ENCODE measurements at regions of chr2 and their contacts with region 1.

Region 1: DNA sequence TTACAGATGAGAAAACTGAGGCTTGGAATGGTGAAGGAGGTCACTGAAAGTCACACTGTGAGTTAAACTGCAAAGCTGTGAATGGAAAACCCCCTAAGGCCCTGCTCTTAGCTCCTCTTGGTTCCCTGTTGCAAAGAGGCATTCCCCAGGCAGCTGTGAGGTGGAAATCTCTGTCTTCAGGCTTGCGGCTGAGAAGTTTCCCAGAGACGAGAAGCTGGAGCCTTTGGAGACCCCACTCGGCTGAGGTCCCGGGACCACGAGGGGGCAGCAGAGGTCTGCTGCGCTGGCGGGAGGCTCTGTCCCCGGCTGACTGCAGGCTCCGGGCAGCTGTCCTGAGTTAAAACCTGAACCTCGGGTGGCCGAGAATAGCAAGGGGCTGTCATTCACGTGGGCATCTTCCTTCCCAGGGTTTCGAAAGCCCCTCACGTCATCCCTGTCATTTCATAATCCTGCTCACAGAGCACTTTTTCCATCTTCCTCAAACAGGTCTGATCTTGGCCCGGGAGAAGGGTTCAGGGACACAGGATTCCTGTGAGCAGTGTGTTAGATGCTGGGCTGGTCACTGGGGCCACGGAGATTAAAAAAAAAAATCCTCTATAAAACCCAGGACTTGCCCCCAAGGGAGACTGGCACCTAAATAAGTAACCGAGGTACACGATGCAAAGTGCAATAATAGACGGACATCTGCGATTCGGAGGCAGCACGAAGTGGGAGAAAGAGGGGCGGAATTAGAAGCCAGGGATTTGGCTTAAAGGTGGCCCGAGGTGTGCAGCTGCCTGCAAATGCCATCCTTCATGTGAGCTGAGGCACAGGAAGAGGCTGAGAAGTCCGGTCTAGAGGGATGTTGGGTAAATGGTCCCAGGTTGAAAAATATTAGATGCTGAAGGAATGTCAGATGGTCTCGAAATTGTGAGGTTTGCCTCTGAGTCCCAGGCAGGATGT is 24.6 kb upstream of the ATOH8 start:
- DNase-seq: peak; percentile 90
- H3K4me3 ChIP-seq: peak overlapping the region in 1 of 2 experiments; percentile 47; a peak in 1 of 4 replicates
- H3K27ac ChIP-seq: no peak overlapping the region
- H3K4me1 ChIP-seq: peaks cover 0 to 11% of the 10 kb centered on the region in 2 experiments; a peak in 1 of 4 replicates
- H3K27me3 ChIP-seq: no peaks in the 10 kb centered on the region
- CTCF ChIP-seq: peak; percentile 97
- EP300 ChIP-seq: no peak
- RAD21 ChIP-seq: peak; percentile 99

Region 2: GRCh38 chr2:85538486-85539360 is 190.4 kb before region 1 on chr2 and contains the start of gene MAT2A:
- CTCF ChIA-PET with region 1: no interaction called
- POLR2A ChIA-PET with region 1: no interaction called
- DNase-seq: peak; percentile 97
- H3K4me3 ChIP-seq: peak within 1 kb of the TSS; percentile 94 to 99
- H3K27ac ChIP-seq: peak within 1 kb of the TSS; percentile 98 to 100
- H3K4me1 ChIP-seq: peaks cover 29 to 43% of the 10 kb centered on the region in 2 experiments; a peak in 3 of 4 replicates
- H3K27me3 ChIP-seq: no peaks in the 10 kb centered on the region
- CTCF ChIP-seq: peak; percentile 67
- EP300 ChIP-seq: peak in 1 of 2 experiments; percentile 10; a peak in 1 of 4 replicates
- RAD21 ChIP-seq: peak; percentile 60
- polyA plus RNA-seq, gene MAT2A: 187 and 326 TPM in 2 replicates

Region 3: DNA sequence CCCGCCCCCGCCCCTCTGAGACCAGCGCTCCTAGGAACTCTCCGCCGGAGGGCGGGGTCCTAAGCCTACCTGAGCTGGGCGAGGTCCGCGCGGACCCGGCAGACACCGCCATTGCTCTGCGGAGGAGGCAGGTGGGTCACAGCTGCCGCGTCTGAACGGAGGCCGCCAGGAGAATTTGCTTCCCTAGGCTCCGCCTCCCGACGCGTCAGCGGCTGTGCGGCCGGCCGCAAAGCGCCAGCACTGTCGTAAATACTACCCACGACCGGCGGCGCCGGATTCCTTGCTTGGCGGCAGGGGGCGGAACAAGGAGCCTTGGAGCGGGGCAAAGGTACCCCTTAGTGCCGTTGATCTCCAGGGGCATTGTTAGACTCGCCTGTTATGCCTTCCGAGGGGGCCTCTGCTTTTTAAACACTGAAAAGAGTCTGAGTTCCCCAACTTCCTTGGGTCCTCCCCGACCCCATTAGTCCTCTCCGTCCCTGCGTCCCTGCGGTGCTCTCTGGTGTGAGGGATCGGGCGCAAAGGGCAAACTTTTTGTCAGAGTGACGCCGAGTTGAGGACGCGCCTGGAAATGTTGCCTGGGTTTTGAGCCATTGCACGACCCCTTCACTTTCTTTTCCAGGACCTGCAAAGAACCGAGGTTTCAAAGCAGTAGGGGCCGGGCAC is 167.7 kb before region 1 on chr2 and contains the start of gene GGCX:
- CTCF ChIA-PET with region 1: no interaction called
- POLR2A ChIA-PET with region 1: no interaction called
- DNase-seq: peak; percentile 91
- H3K4me3 ChIP-seq: peak within 1 kb of the TSS; percentile 65 to 97
- H3K27ac ChIP-seq: peak within 1 kb of the TSS; percentile 78 to 83
- H3K4me1 ChIP-seq: no peaks in the 10 kb centered on the region; a peak in 2 of 4 replicates
- H3K27me3 ChIP-seq: no peaks in the 10 kb centered on the region
- CTCF ChIP-seq: no peak
- EP300 ChIP-seq: 0 out of 4 replicates have a peak, but pooled peaks of 1 of the 2 experiments have one; percentile 14
- RAD21 ChIP-seq: no peak
- polyA plus RNA-seq, gene GGCX: 26.5 and 34.5 TPM in 2 replicates

Region 4: DNA sequence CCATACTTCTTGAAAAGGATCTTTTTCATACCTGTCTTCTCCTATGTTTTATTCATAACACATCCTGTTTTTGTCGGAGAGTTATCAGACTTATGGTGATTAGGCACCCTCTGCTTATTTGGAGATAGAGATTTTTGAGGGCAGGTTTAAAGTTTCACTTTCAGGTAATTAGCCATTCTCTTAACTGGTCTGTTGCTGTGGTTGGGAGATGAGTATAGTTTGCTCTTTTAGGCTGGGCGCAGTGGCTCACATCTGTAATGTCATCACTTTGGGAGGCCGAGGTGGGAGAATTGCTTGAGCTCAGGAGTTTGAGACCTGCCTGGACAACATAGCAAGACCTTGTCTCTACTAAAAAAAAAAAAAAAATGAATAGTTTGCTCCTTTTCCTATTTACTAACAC is 86.4 kb before region 1 on chr2:
- CTCF ChIA-PET with region 1: interaction called, 12 read pairs
- POLR2A ChIA-PET with region 1: no interaction called
- DNase-seq: no peak
- H3K4me3 ChIP-seq: no peak overlapping the region
- H3K27ac ChIP-seq: no peak overlapping the region
- H3K4me1 ChIP-seq: no peaks in the 10 kb centered on the region
- H3K27me3 ChIP-seq: no peaks in the 10 kb centered on the region
- CTCF ChIP-seq: no peak
- EP300 ChIP-seq: no peak
- RAD21 ChIP-seq: no peak

Region 5: GRCh38 chr2:85707304-85707703 is 21.9 kb before region 1 on chr2:
- CTCF ChIA-PET with region 1: interaction called, 31 read pairs
- POLR2A ChIA-PET with region 1: no interaction called
- DNase-seq: peak; percentile 70
- H3K4me3 ChIP-seq: no peak overlapping the region
- H3K27ac ChIP-seq: no peak overlapping the region
- H3K4me1 ChIP-seq: peaks cover 0 to 4% of the 10 kb centered on the region in 2 experiments; a peak in 2 of 4 replicates
- H3K27me3 ChIP-seq: no peaks in the 10 kb centered on the region
- CTCF ChIP-seq: peak; percentile 95
- EP300 ChIP-seq: no peak
- RAD21 ChIP-seq: peak; percentile 69

Region 6: GRCh38 chr2:85758361-85759256 is 29.5 kb after region 1 on chr2:
- CTCF ChIA-PET with region 1: interaction called, 168 read pairs
- POLR2A ChIA-PET with region 1: no interaction called
- DNase-seq: peak; percentile 84
- H3K4me3 ChIP-seq: no peak overlapping the region
- H3K27ac ChIP-seq: no peak overlapping the region
- H3K4me1 ChIP-seq: peaks cover 3 to 32% of the 10 kb centered on the region in 2 experiments; a peak in 1 of 4 replicates
- H3K27me3 ChIP-seq: no peaks in the 10 kb centered on the region
- CTCF ChIP-seq: no peak
- EP300 ChIP-seq: no peak; a peak in 1 of 4 replicates
- RAD21 ChIP-seq: no peak

Region 7: GRCh38 chr2:85790499-85791188 is 61.5 kb after region 1 on chr2:
- CTCF ChIA-PET with region 1: interaction called, 23 read pairs
- POLR2A ChIA-PET with region 1: no interaction called
- DNase-seq: no peak
- H3K4me3 ChIP-seq: no peak overlapping the region
- H3K27ac ChIP-seq: no peak overlapping the region
- H3K4me1 ChIP-seq: peaks cover 17 to 30% of the 10 kb centered on the region in 2 experiments; a peak in 3 of 4 replicates
- H3K27me3 ChIP-seq: no peaks in the 10 kb centered on the region
- CTCF ChIP-seq: no peak
- EP300 ChIP-seq: no peak
- RAD21 ChIP-seq: no peak

Region 8: GRCh38 chr2:85813982-85814801 is 85.0 kb after region 1 on chr2:
- CTCF ChIA-PET with region 1: interaction called, 626 read pairs
- POLR2A ChIA-PET with region 1: interaction called, 5 read pairs
- DNase-seq: peak; percentile 92
- H3K4me3 ChIP-seq: no peak overlapping the region
- H3K27ac ChIP-seq: no peak overlapping the region
- H3K4me1 ChIP-seq: peaks cover 0 to 17% of the 10 kb centered on the region in 2 experiments; a peak in 1 of 4 replicates
- H3K27me3 ChIP-seq: no peaks in the 10 kb centered on the region
- CTCF ChIP-seq: peak; percentile 94
- EP300 ChIP-seq: no peak
- RAD21 ChIP-seq: peak; percentile 100

Region 9: DNA sequence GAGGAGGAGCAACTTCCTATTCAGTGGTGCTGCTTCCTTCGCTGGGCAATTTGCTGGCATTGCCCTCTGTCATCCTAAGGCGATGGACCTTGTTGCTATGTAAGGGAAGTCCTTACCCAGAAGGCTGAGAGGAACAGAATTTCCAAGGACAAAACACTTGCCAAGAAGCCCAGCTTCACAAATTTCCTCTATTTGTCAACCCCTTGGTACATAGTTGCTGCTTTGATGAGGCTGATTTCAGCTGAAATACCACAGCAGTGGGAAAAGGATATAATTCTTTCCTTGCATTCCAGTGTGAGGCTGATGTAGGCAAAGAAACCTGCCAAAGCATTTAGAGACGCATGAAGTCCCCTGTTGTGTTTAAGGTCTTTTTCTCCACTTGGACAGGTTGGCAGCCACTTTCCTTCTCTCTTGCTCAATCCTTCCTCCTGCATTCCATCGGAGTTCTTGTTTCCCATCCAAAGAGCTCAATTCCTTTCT is 176.1 kb after region 1 on chr2:
- CTCF ChIA-PET with region 1: no interaction called
- POLR2A ChIA-PET with region 1: no interaction called
- DNase-seq: no peak
- H3K4me3 ChIP-seq: no peak overlapping the region
- H3K27ac ChIP-seq: peak overlapping the region in 1 of 2 experiments; percentile 11; a peak in 1 of 4 replicates
- H3K4me1 ChIP-seq: no peaks in the 10 kb centered on the region
- H3K27me3 ChIP-seq: no peaks in the 10 kb centered on the region
- CTCF ChIP-seq: no peak
- EP300 ChIP-seq: no peak
- RAD21 ChIP-seq: no peak

Region 10: DNA sequence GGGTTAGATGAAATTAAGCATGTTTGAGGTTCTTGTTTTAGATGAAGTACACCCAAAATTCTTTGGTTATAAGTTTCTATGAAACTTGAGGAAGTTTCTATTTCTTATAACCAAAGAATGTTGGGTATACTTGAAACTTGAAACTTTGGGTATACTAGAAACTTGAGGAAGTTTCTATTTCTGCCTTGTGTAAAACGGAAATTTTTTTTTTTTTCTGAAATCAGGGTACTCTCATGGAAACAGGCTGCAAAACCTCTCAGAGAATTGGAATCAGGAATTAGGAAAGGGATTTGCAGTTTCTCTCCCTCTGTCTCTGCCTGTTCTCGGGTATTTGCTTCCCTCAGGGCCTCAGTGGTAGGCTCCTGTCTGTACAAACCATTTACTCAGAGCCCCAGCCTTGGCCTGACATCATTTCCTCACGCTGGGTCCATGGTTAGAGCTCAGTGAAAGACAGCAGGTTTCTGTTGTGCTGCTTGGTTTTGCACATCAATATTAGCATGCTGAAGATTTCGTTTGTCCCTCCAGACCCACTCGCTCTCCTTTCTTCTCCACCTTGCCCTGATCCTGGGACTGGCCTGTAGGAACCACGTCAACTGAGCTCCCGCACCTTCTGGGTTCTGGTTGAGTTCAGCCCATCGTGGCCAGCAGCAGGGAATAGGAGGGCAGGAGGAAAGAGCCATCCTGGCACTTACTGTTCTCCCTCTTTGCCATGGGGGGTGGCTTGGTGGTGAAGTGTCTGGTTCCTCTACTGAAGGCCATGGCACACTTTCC is 270.1 kb after region 1 on chr2:
- CTCF ChIA-PET with region 1: no interaction called
- POLR2A ChIA-PET with region 1: no interaction called
- DNase-seq: no peak
- H3K4me3 ChIP-seq: no peak overlapping the region
- H3K27ac ChIP-seq: peak overlapping the region; percentile 86 to 88; a peak in 3 of 4 replicates
- H3K4me1 ChIP-seq: peaks cover 20 to 33% of the 10 kb centered on the region in 2 experiments; a peak in 3 of 4 replicates
- H3K27me3 ChIP-seq: no peaks in the 10 kb centered on the region
- CTCF ChIP-seq: no peak
- EP300 ChIP-seq: no peak; a peak in 1 of 4 replicates
- RAD21 ChIP-seq: no peak